GM10248 (cell line): ENCODE measurements at regions of chr11 and their contacts with region 1.

Region 1: GRCh38 chr11:61056571-61056970 is 45.7 kb upstream of the CD5 start:
- DNase-seq: no peak
- CTCF ChIP-seq: no peak

Region 2: DNA sequence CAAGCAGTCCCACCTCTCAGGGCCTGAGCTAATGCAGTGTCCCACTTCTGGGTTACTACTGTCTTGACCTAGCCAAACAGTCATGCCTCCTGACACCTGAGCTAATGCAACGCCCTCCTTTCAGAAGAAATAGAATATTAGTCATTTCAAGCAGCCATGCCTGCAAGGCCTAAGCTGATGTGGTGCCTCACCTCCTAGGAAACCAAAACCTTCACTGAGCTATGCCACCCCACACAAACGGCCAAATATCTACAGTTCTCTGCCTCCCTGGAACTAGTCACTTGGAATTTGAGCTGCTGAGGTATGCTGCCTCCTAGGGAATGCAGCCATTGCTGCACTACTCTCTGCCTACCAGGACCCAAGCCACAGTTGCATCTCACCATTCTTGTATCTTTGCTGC is 737.8 kb before region 1 on chr11:
- CTCF ChIA-PET with region 1: no interaction called
- POLR2A ChIA-PET with region 1: no interaction called
- DNase-seq: no peak
- CTCF ChIP-seq: no peak

Region 3: DNA sequence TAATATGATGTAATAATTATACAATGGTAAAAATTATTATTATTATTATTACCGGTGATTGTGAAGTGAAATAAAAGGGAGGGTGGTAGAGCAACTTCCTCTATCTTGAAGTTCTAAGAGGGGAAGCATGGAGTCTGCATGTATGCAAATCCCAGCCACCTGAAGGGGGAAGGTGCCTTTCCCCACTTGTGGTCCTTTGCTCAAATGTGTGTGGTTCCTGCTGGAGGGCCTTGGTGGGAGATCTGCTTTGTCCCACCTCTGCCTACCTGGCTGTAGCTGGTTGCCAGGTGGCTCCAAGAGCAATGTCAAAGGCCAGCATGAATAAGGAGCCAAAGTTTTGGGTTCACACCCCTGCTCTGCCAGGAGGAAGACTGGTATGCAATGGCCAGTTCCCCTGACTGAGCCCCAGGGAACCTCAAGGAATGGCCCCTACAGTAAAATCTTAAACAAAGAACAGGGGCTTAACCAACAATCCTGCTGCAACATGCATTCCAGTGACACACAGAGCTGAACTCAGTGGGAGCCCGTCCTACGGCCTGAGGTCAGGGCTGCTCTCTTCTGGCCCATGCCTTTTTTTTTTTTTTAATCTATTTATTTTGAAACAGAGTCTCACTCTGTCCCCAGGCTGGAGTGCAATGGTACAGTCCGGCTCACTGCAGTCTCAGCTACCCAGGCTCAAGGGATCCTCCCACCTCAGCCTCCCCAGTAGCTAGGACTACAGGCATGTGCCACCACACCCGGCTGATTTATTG is 123.8 kb before region 1 on chr11:
- CTCF ChIA-PET with region 1: no interaction called
- POLR2A ChIA-PET with region 1: no interaction called
- DNase-seq: no peak
- CTCF ChIP-seq: no peak

Region 4: DNA sequence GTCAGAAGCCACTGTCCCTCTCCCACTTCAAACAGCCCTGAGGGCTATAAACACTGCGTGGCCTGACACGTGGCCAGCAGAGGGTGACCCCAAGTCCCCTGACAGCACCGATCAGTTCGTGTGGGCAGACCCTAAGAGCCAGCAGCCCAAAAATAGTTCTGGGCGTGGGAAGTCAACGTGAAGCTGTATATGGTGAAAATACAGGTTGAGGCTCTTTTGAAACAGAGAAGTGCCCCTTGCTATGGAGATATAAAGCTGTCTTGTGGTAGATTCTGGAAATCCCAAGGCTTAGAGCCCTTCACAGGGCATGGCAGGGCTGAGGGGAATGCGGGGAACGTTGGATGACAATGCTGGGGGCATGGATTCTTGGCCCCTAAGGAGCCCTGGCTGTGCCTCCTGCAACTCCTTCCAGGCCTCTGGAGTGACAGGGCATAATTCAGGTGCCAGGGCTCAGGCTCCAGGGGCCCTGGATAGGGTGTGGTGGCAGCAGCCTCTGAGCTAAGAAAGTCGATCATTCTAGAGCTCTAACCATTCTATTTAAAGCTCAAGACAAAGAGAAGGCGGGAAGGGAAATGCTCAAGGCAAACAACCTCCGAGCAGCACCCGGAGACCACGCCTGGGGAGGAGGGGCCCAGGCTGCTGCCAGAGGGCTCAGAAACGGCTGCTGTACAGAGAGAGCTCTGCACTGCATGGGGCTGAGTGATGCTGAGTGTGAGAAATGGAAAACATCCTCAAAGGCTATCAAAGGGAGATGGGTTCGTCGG is 14.6 kb before region 1 on chr11:
- CTCF ChIA-PET with region 1: interaction called, 42 read pairs
- POLR2A ChIA-PET with region 1: interaction called, 4 read pairs
- DNase-seq: peak; percentile 84
- CTCF ChIP-seq: no peak